HAP-1 (cell line): ENCODE measurements at regions of chr2 and their contacts with region 1.

Region 1: GRCh38 chr2:13006829-13007717 is 290.3 kb downstream of the TRIB2 start:
- DNase-seq: peak; percentile 60 to 74
- H3K4me3 ChIP-seq: no peak overlapping the region
- H3K4me1 ChIP-seq: no peaks in the 10 kb centered on the region
- H3K27me3 ChIP-seq: peaks cover 9% of the 10 kb centered on the region; the same call in 1 of the 2 replicates

Region 2: DNA sequence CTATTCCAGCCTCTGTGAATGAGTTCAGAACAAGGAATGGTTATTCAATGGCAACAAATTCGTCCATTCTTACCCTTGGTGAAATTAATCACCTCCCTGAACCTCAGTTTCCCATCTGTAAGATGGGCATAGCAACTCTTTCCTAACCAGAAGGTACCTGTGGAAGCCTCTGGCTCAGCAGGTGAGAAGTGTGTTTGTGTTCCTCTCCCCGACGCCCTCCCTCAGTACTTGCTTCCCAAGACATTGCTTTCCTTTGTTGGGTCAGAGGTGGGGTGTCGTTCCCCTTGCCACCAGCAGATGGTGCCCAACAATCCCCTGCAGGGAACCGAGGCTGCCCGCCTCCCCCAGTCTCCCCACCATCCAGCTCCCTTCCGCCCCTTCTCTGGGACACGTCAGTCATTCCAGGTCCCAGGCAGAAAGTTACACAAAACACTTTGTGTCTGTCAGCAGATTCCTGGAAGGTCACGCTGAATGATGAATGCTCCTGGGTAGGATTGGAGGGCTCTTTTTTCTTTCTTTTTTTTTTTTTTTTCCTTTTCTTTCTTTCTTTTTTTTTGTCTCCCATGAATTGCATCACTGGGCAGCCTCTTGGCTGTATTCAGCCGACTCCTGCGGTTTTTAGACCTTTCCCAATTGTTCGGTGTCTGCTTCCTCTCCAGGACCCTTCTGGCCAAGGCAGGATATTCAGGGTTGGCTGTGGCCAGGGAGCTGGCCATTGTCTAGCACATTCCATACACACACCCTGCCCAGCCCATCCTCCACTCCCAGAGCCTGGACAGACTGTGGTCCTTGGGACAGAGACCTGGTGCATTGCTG is 1143.4 kb before region 1 on chr2:
- in situ Hi-C with region 1: loop called (anchors 25 kb)
- DNase-seq: peak; percentile 57 to 85
- H3K4me3 ChIP-seq: no peak overlapping the region
- H3K4me1 ChIP-seq: no peaks in the 10 kb centered on the region
- H3K27me3 ChIP-seq: peaks cover 3% of the 10 kb centered on the region; the same call in 1 of the 2 replicates